Calu3 (cell line): ENCODE measurements at regions of chr17 and their contacts with region 1.

Region 1: GRCh38 chr17:60154616-60155426 is 5.0 kb downstream of the CA4 start:
- DNase-seq: no peak
- H3K4me3 Mint-ChIP-seq: no peak overlapping the region
- H3K27ac Mint-ChIP-seq: no peak overlapping the region
- H3K4me1 Mint-ChIP-seq: peaks cover 9% of the 10 kb centered on the region
- H3K27me3 Mint-ChIP-seq: peaks cover 19% of the 10 kb centered on the region
- CTCF ChIP-seq: no peak

Region 2: DNA sequence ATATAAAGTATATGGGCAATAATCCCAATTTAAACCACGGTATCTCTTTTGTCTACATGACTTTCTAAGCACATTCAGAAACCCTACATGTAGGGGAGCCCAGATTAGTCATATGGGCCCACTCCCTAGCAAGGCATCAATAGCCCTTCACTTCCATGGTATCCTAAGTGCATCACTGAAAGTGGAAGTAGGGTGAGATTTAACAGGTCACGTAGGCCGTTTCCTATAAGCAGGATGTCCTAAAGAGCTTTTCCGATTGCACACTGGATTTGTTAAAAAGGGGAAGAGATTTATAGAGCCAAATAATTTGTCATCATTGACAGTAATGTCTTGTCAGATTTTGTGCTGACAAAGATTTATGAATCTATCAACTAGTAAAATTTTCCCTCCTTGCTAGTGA is 33.9 kb after region 1 on chr17:
- CTCF ChIA-PET with region 1: no interaction called
- intact Hi-C with region 1: loop called (anchors 5 kb)
- DNase-seq: no peak
- H3K4me3 Mint-ChIP-seq: no peak overlapping the region
- H3K27ac Mint-ChIP-seq: no peak overlapping the region
- H3K4me1 Mint-ChIP-seq: peaks cover 13% of the 10 kb centered on the region
- H3K27me3 Mint-ChIP-seq: no peaks in the 10 kb centered on the region
- CTCF ChIP-seq: no peak